Activated CD4-positive, alpha-beta memory T cell treated with anti-CD3 and anti-CD28 coated beads for 36 hours (primary cell): ENCODE measurements at regions of chr1 and their contacts with region 1.

Region 1: DNA sequence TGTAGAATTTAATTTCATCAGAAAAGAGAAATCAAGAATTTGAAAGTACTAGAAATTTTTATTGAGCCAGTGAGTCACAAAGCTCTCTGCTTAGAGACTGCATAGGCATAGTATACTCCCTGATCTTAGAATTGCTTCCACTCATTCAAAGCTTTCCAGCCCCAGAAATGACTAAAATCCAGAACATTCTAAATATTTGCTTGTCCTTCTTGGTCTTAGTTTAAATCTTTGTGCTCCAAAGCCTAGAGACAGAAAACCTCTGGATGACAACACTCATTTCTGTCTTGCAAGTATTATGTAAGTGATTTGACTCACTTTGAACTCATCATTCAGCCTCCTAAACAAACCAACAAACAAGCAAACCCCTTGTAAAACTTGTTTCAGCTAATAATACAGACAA is 74.2 kb downstream of the PTPRC start:
- DNase-seq: no peak
- H3K4me3 Mint-ChIP-seq: no peak overlapping the region
- H3K27ac Mint-ChIP-seq: peak overlapping the region; percentile 67
- H3K4me1 Mint-ChIP-seq: peaks cover 58% of the 10 kb centered on the region
- H3K27me3 Mint-ChIP-seq: no peaks in the 10 kb centered on the region

Region 2: DNA sequence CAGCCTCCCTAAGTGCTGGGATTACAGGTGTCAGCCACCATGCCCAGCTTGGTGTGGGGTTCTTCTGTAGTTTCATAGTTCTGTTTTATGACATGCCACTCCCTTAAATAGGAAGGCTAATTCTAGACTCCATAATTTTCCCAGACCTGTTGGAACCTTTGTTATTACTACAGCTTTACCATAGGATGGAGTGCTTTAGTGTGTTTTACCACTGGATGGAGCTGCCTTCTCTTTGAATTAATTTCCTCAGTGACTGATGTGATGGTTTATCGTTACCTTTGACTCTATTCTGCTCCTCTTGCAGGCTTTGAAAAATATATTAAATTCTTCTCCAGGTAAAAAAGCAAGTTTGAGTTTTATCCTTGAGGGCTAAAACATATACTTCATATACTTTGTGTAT is 640.9 kb before region 1 on chr1:
- CTCF ChIA-PET with region 1: no interaction called
- POLR2A ChIA-PET with region 1: no interaction called
- intact Hi-C with region 1: no loop called
- DNase-seq: no peak
- H3K4me3 Mint-ChIP-seq: no peak overlapping the region
- H3K27ac Mint-ChIP-seq: no peak overlapping the region
- H3K4me1 Mint-ChIP-seq: no peaks in the 10 kb centered on the region
- H3K27me3 Mint-ChIP-seq: peaks cover 20% of the 10 kb centered on the region

Region 3: GRCh38 chr1:198726455-198726854 is 13.4 kb after region 1 on chr1:
- CTCF ChIA-PET with region 1: interaction called, 4 read pairs
- POLR2A ChIA-PET with region 1: interaction called, 3 read pairs
- intact Hi-C with region 1: loop called (anchors 1 kb)
- DNase-seq: no peak
- H3K4me3 Mint-ChIP-seq: no peak overlapping the region
- H3K27ac Mint-ChIP-seq: peak overlapping the region; percentile 61
- H3K4me1 Mint-ChIP-seq: peaks cover 48% of the 10 kb centered on the region
- H3K27me3 Mint-ChIP-seq: no peaks in the 10 kb centered on the region

Region 4: GRCh38 chr1:198734323-198735008 is 21.4 kb after region 1 on chr1:
- CTCF ChIA-PET with region 1: interaction called, 4 read pairs
- POLR2A ChIA-PET with region 1: no interaction called
- intact Hi-C with region 1: loop called (anchors 1 kb)
- DNase-seq: no peak
- H3K4me3 Mint-ChIP-seq: no peak overlapping the region
- H3K27ac Mint-ChIP-seq: peak overlapping the region; percentile 68
- H3K4me1 Mint-ChIP-seq: peaks cover 70% of the 10 kb centered on the region
- H3K27me3 Mint-ChIP-seq: no peaks in the 10 kb centered on the region

Region 5: GRCh38 chr1:198749279-198749678 is 36.2 kb after region 1 on chr1:
- CTCF ChIA-PET with region 1: no interaction called
- POLR2A ChIA-PET with region 1: interaction called, 3 read pairs
- intact Hi-C with region 1: loop called (anchors 5 kb)
- DNase-seq: no peak
- H3K4me3 Mint-ChIP-seq: no peak overlapping the region
- H3K27ac Mint-ChIP-seq: peak overlapping the region; percentile 52
- H3K4me1 Mint-ChIP-seq: peaks cover 12% of the 10 kb centered on the region
- H3K27me3 Mint-ChIP-seq: no peaks in the 10 kb centered on the region

Region 6: GRCh38 chr1:199002661-199003060 is 289.6 kb after region 1 on chr1:
- CTCF ChIA-PET with region 1: no interaction called
- POLR2A ChIA-PET with region 1: no interaction called
- intact Hi-C with region 1: no loop called
- DNase-seq: no peak
- H3K4me3 Mint-ChIP-seq: no peak overlapping the region
- H3K27ac Mint-ChIP-seq: no peak overlapping the region
- H3K4me1 Mint-ChIP-seq: no peaks in the 10 kb centered on the region
- H3K27me3 Mint-ChIP-seq: no peaks in the 10 kb centered on the region